Aorta (tissue), 5 donors: ENCODE measurements at regions of chr7 and their contacts with region 1.

Region 1: DNA sequence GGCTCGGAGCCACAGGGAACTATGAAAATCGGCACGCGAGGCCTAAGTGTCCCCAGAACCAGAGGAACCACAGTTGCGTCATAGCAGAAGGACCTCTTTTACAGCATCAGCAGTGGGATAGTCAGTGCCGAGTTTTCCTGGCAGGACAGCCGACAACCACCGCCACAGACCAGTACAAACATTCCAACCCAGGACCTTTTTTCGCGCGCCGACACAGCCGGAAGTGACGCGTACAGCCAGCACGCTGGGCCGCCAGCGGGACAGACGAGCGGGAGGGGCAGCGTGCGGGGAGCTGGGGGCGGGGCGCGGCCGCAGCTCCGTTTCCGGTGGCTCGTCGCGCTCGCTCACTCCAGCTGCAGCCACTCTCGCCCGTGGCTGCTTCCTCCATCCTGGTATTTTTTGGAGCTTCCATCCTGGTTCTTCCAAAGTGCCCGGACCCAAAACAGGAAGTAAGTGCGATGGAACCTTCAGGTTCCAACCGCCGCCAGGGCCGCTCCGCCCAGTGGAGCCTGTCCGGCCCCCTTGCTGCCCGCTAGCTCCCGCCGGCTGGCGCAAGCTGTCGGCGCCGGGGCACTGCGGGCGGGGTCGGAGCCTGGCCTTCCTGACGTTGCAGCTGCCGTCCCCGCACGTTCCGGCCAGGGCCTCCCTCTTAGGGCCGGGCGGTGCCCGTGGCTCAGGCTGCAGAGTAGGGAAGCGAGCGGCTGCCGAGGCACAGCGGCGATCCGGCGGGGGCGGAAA is at the start of gene DMTF1:
- DNase-seq: peak; percentile 96 to 98
- ATAC-seq: peak; percentile 98
- H3K4me3 ChIP-seq: peak within 1 kb of the TSS; percentile 29 to 86
- H3K27ac ChIP-seq: peak within 1 kb of the TSS; percentile 92 to 97
- H3K4me1 ChIP-seq: peaks cover 0 to 3% of the 10 kb centered on the region in 2 donors
- H3K27me3 ChIP-seq: no peaks in the 10 kb centered on the region
- total RNA-seq, gene DMTF1: 87.2 to 135 TPM

Region 2: DNA sequence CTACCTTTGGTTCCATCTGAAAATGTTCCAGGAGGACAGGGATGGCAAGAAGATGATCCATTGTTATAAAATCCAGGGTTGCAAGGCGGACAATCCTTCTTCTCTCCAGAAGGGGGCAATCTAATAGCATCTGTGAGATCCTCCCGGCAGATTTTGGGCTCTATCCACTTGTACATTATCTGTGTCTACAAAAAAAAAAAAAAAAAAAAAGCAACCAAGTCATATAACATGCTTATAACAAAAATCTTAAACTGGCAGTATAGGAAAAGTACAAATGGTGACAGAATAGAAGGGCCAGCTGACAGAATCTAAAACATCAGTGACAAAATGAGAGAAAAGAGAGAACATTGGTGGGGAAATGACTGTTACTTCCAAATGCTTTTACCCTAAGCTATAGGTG is 225.5 kb before region 1 on chr7:
- intact Hi-C with region 1: loop called in 1 of 2 experiments (anchors 5 kb)
- DNase-seq: no peak
- ATAC-seq: no peak
- H3K4me3 ChIP-seq: no peak overlapping the region
- H3K27ac ChIP-seq: no peak overlapping the region
- H3K4me1 ChIP-seq: no peaks in the 10 kb centered on the region
- H3K27me3 ChIP-seq: no peaks in the 10 kb centered on the region

Region 3: GRCh38 chr7:86942081-86942480 is 210.2 kb before region 1 on chr7:
- intact Hi-C with region 1: loop called in 1 of 2 experiments (anchors 5 kb)
- DNase-seq: no peak
- ATAC-seq: no peak
- H3K4me3 ChIP-seq: no peak overlapping the region
- H3K27ac ChIP-seq: no peak overlapping the region
- H3K4me1 ChIP-seq: no peaks in the 10 kb centered on the region
- H3K27me3 ChIP-seq: peaks cover 0 to 2% of the 10 kb centered on the region in 2 donors

Region 4: GRCh38 chr7:87219545-87220025 is 67.3 kb after region 1 on chr7 and contains the start of gene TMEM243:
- intact Hi-C with region 1: loop called (anchors 1 to 5 kb)
- DNase-seq: peak; percentile 92
- ATAC-seq: peak; percentile 93
- H3K4me3 ChIP-seq: peak within 1 kb of the TSS; percentile 80 to 96
- H3K27ac ChIP-seq: peak within 1 kb of the TSS; percentile 23 to 72
- H3K4me1 ChIP-seq: peaks cover 0 to 7% of the 10 kb centered on the region in 2 donors
- H3K27me3 ChIP-seq: no peaks in the 10 kb centered on the region
- total RNA-seq, gene TMEM243: 25.3 to 37.7 TPM

Region 5: GRCh38 chr7:87345166-87345927 is 193.1 kb after region 1 on chr7 and contains the start of gene CROT:
- intact Hi-C with region 1: loop called (anchors 10 kb)
- DNase-seq: peak; percentile 98
- ATAC-seq: peak; percentile 100
- H3K4me3 ChIP-seq: peak within 1 kb of the TSS; percentile 74 to 78
- H3K27ac ChIP-seq: peak within 1 kb of the TSS; percentile 83 to 89
- H3K4me1 ChIP-seq: peaks cover 1 to 3% of the 10 kb centered on the region in 2 donors
- H3K27me3 ChIP-seq: no peaks in the 10 kb centered on the region
- total RNA-seq, gene CROT: 11.8 to 19.5 TPM

Region 6: GRCh38 chr7:87416682-87417587 is 264.7 kb after region 1 on chr7:
- intact Hi-C with region 1: loop called in 1 of 2 experiments (anchors 10 kb)
- DNase-seq: peak in 1 of 2 donors; percentile 56
- ATAC-seq: peak; percentile 77
- H3K4me3 ChIP-seq: no peak overlapping the region
- H3K27ac ChIP-seq: no peak overlapping the region
- H3K4me1 ChIP-seq: peaks cover 0 to 2% of the 10 kb centered on the region in 2 donors
- H3K27me3 ChIP-seq: no peaks in the 10 kb centered on the region